ENCODE measurements at regions of chr1 and their contacts with region 1.

Region 1: GRCh38 chr1:201703621-201704439 is 125.1 kb upstream of the IPO9 start:
- DNase-seq: peak; percentile 85
- H3K4me3 ChIP-seq: no peak overlapping the region
- H3K27ac ChIP-seq: peak overlapping the region; percentile 63 to 78 (median 72)
- H3K4me1 ChIP-seq: peaks cover 14 to 22% (median 18%) of the 10 kb centered on the region in 4 donors
- H3K27me3 ChIP-seq: no peaks in the 10 kb centered on the region
- CTCF ChIP-seq: peak; percentile 93 to 97 (median 97)
- EP300 ChIP-seq: no peak
- POLR2A ChIP-seq: no peak

Region 2: GRCh38 chr1:201649761-201650622 is 53.8 kb before region 1 on chr1:
- in situ Hi-C with region 1: no loop called
- intact Hi-C with region 1: loop called (anchors 5 kb)
- DNase-seq: peak; percentile 90
- H3K4me3 ChIP-seq: peak overlapping the region; percentile 39 to 57 (median 49)
- H3K27ac ChIP-seq: peak overlapping the region; percentile 82 to 89 (median 84)
- H3K4me1 ChIP-seq: peaks cover 19 to 44% (median 31%) of the 10 kb centered on the region in 4 donors
- H3K27me3 ChIP-seq: peaks cover 5% of the 10 kb centered on the region
- CTCF ChIP-seq: peak in 1 of 5 experiments; percentile 23
- EP300 ChIP-seq: no peak
- POLR2A ChIP-seq: peak; percentile 78

Measured in transverse colon (tissue), 4 donors.